Activated naive CD4-positive, alpha-beta T cell treated with anti-CD3 and anti-CD28 coated beads for 36 hours (primary cell): ENCODE measurements at regions of chr5 and their contacts with region 1.

Region 1: DNA sequence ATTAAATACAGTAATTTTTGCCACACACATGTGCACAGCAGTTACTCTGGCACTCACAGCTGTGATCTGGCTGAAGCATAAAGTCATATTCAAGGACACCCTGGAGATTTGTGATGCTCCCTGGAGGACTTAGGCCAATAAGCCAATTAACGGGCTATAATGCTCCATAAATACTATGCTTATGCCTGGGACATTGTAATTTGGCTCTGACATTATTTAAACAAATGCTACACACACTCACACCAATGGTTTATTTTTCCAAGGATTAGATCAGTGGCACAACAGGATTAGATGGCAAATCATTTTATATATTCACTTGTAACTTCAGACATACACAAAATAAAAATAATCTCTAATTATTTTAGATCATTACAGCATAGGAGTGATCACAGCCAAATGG is 111.2 kb downstream of the LMNB1 start:
- DNase-seq: no peak
- H3K4me3 Mint-ChIP-seq: no peak overlapping the region
- H3K27ac Mint-ChIP-seq: no peak overlapping the region
- H3K4me1 Mint-ChIP-seq: no peaks in the 10 kb centered on the region
- H3K27me3 Mint-ChIP-seq: no peaks in the 10 kb centered on the region

Region 2: GRCh38 chr5:126914801-126915436 is 26.7 kb after region 1 on chr5:
- CTCF ChIA-PET with region 1: no interaction called
- intact Hi-C with region 1: loop called (anchors 1 kb)
- DNase-seq: no peak
- H3K4me3 Mint-ChIP-seq: no peak overlapping the region
- H3K27ac Mint-ChIP-seq: no peak overlapping the region
- H3K4me1 Mint-ChIP-seq: peaks cover 6% of the 10 kb centered on the region
- H3K27me3 Mint-ChIP-seq: no peaks in the 10 kb centered on the region

Region 3: DNA sequence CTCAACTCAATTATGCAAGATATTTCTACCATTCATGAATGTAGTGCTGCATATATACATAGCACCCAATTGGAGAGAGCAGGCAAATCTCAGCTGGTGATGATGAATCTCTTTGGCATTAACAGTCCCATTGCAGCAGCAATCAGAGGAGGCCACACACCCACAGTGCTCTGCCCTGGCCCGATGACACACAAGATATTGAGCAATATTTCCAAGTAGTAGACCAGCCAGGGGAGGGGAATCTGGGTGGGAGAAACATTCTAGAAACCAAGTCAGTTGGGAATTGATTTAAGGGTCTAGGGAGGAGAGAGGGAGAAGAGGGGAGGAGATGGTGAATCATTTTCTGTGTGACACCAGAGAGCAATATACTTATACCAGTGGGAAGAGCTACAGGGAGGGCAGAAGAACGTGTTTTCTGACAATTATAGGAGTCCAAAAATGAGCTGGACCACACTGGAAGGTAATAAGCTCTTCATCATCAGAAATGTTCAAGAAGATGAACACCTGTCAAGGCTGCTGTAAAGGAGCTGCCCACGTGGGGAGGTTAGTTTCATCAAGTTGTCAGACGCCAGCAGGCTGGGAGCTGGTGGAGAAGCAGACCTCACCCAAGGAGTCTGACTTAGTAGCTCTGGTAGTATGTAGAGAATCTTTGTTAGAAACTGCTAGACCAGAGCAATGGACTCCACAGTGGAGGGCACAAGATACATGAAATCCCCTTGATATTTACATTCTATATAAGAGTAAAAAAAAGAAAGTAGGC is 200.3 kb after region 1 on chr5:
- CTCF ChIA-PET with region 1: no interaction called
- intact Hi-C with region 1: no loop called
- DNase-seq: no peak
- H3K4me3 Mint-ChIP-seq: no peak overlapping the region
- H3K27ac Mint-ChIP-seq: no peak overlapping the region
- H3K4me1 Mint-ChIP-seq: peaks cover 6% of the 10 kb centered on the region
- H3K27me3 Mint-ChIP-seq: no peaks in the 10 kb centered on the region